ENCODE measurements at regions of chr16 and their contacts with region 1.

Region 1: GRCh38 chr16:3134564-3135417 is at the start of gene ZNF213:
- DNase-seq: peak; percentile 96 to 97
- ATAC-seq: peak; percentile 99 to 100
- H3K4me3 ChIP-seq: peak within 1 kb of the TSS; percentile 76 to 99 (median 88)
- H3K27ac ChIP-seq: peak within 1 kb of the TSS; percentile 87 to 96 (median 93)
- H3K4me1 ChIP-seq: peaks cover 25 to 47% of the 10 kb centered on the region in 2 donors
- H3K27me3 ChIP-seq: no peaks in the 10 kb centered on the region
- CTCF ChIP-seq: no peak
- POLR2A ChIP-seq: peak; percentile 87 to 93
- total RNA-seq, gene ZNF213: 8.9 to 18.6 (median 14.5) TPM

Region 2: GRCh38 chr16:2102471-2102870 is 1032.3 kb before region 1 on chr16:
- in situ Hi-C with region 1: no loop called
- intact Hi-C with region 1: no loop called
- DNase-seq: no peak
- ATAC-seq: no peak
- H3K4me3 ChIP-seq: no peak overlapping the region
- H3K27ac ChIP-seq: no peak overlapping the region
- H3K4me1 ChIP-seq: no peaks in the 10 kb centered on the region
- H3K27me3 ChIP-seq: no peaks in the 10 kb centered on the region
- CTCF ChIP-seq: no peak
- POLR2A ChIP-seq: no peak

Region 3: GRCh38 chr16:3087243-3088235 is 47.3 kb before region 1 on chr16:
- in situ Hi-C with region 1: no loop called
- intact Hi-C with region 1: loop called (anchors 1 kb)
- DNase-seq: no peak
- ATAC-seq: peak; percentile 39 to 47
- H3K4me3 ChIP-seq: peak overlapping the region in 3 of 4 donors; percentile 16 to 44 (median 28)
- H3K27ac ChIP-seq: peak overlapping the region; percentile 39 to 71 (median 68)
- H3K4me1 ChIP-seq: peaks cover 0 to 4% of the 10 kb centered on the region in 2 donors
- H3K27me3 ChIP-seq: peaks cover 0 to 6% (median 2%) of the 10 kb centered on the region in 3 donors
- CTCF ChIP-seq: peak in 1 of 5 experiments; percentile 24
- POLR2A ChIP-seq: no peak

Region 4: DNA sequence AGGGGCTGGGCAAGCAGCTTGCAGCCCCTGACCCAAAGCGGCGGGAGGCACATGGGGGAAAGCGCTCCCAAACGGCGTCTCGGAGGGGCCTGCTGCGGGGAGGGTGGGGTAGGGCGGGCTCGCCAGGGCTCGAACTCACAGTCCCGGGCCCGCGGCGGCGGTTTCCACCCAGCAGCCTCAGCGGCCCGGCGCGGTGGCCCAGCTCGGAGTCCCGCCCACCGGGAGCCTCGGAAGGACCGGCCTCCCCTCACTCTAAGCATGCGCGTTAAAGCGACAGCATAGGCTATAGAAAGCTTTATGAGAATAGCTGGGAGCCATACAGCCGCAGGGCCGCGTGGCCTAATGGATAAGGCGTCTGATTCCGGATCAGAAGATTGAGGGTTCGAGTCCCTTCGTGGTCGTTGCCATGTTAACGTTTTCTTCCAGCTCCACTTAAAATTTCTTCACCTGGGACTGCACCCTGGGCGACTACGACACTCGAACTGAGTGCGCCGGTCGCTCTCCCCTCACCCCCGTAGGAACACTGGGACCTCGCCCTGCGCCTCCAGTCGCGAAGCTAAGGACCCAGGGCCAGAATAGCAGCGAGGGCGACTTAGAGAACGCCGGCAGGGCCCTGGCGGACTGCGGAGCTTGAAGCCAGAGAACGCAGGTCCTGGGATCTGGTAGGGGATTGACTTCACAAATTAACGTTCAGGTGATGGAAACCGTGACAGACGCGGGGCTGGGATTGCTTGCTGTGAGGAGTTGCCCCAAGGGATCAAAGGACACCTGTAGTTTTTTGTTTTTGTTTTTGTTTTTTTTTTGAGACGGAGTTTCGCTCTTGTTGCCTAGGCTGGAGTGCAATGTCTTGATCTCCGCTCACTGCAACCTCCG is 15.8 kb after region 1 on chr16:
- in situ Hi-C with region 1: no loop called
- intact Hi-C with region 1: loop called (anchors 1 kb)
- DNase-seq: peak; percentile 77 to 88
- ATAC-seq: peak; percentile 83 to 86
- H3K4me3 ChIP-seq: peak overlapping the region; percentile 67 to 87 (median 67)
- H3K27ac ChIP-seq: peak overlapping the region; percentile 68 to 78 (median 72)
- H3K4me1 ChIP-seq: peaks cover 13% of the 10 kb centered on the region in 2 donors
- H3K27me3 ChIP-seq: peaks cover 9 to 22% (median 11%) of the 10 kb centered on the region in 3 donors
- CTCF ChIP-seq: no peak
- POLR2A ChIP-seq: no peak